ENCODE measurements at regions of chr12 and their contacts with region 1.

Region 1: GRCh38 chr12:57520053-57520871 is at the start of gene DDIT3:
- DNase-seq: peak; percentile 94 to 99 (median 96)
- ATAC-seq: peak; percentile 67
- H3K4me3 ChIP-seq: peak within 1 kb of the TSS; percentile 86
- H3K27ac ChIP-seq: peak within 1 kb of the TSS; percentile 99
- H3K4me1 ChIP-seq: peaks cover 34 to 48% of the 10 kb centered on the region in 2 experiments
- H3K27me3 ChIP-seq: no peaks in the 10 kb centered on the region
- CTCF ChIP-seq: 0 out of 6 replicates have a peak, but pooled peaks of 1 of the 3 experiments have one; percentile 1
- EP300 ChIP-seq: no peak
- POLR2A ChIP-seq: peak; percentile 100
- RAD21 ChIP-seq: no peak
- polyA plus RNA-seq, gene DDIT3: 254 to 272 TPM

Region 2: GRCh38 chr12:57481671-57482070 is 38.6 kb before region 1 on chr12:
- CTCF ChIA-PET with region 1: no interaction called
- POLR2A ChIA-PET with region 1: interaction called, 10 read pairs
- in situ Hi-C with region 1: no loop called
- intact Hi-C with region 1: loop called (anchors 5 kb)
- DNase-seq: no peak
- ATAC-seq: no peak
- H3K4me3 ChIP-seq: no peak overlapping the region
- H3K27ac ChIP-seq: no peak overlapping the region
- H3K4me1 ChIP-seq: peaks cover 25 to 27% of the 10 kb centered on the region in 2 experiments
- H3K27me3 ChIP-seq: no peaks in the 10 kb centered on the region
- CTCF ChIP-seq: no peak
- EP300 ChIP-seq: no peak
- POLR2A ChIP-seq: no peak
- RAD21 ChIP-seq: no peak

Region 3: DNA sequence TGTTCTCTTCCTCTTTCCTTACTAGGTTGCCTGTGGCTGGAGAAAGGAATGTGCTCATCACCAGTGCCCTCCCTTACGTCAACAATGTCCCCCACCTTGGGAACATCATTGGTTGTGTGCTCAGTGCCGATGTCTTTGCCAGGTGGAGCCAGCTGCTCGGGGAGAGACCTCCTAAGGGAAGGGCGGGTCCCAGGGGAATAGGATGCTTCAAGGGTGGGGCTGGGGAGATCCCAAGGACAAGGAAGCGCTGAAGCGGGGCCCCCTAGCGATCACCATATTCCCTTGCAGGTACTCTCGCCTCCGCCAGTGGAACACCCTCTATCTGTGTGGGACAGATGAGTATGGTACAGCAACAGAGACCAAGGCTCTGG is 22.1 kb before region 1 on chr12:
- CTCF ChIA-PET with region 1: no interaction called
- POLR2A ChIA-PET with region 1: interaction called, 184 read pairs
- in situ Hi-C with region 1: no loop called
- intact Hi-C with region 1: no loop called
- DNase-seq: no peak
- ATAC-seq: peak; percentile 39
- H3K4me3 ChIP-seq: no peak overlapping the region
- H3K27ac ChIP-seq: no peak overlapping the region
- H3K4me1 ChIP-seq: no peaks in the 10 kb centered on the region
- H3K27me3 ChIP-seq: no peaks in the 10 kb centered on the region
- CTCF ChIP-seq: no peak
- EP300 ChIP-seq: no peak
- POLR2A ChIP-seq: no peak
- RAD21 ChIP-seq: no peak

Region 4: GRCh38 chr12:57546438-57547383 is 26.4 kb after region 1 on chr12 and contains the start of gene DCTN2:
- CTCF ChIA-PET with region 1: no interaction called
- POLR2A ChIA-PET with region 1: interaction called, 225 read pairs
- in situ Hi-C with region 1: no loop called
- intact Hi-C with region 1: loop called (anchors 1 kb)
- DNase-seq: peak; percentile 93 to 98 (median 95)
- ATAC-seq: peak; percentile 87
- H3K4me3 ChIP-seq: peak within 1 kb of the TSS; percentile 93
- H3K27ac ChIP-seq: peak within 1 kb of the TSS; percentile 84
- H3K4me1 ChIP-seq: peaks cover 38 to 49% of the 10 kb centered on the region in 2 experiments
- H3K27me3 ChIP-seq: no peaks in the 10 kb centered on the region
- CTCF ChIP-seq: peak in 1 of 3 experiments; percentile 26; a peak in 2 of 6 replicates
- EP300 ChIP-seq: 0 out of 2 replicates have a peak, but pooled peaks have one; percentile 8
- POLR2A ChIP-seq: peak; percentile 79
- RAD21 ChIP-seq: no peak
- polyA plus RNA-seq, gene DCTN2: 43.6 to 64.7 TPM

Region 5: GRCh38 chr12:57583008-57583831 is 63.0 kb after region 1 on chr12:
- CTCF ChIA-PET with region 1: no interaction called
- POLR2A ChIA-PET with region 1: interaction called, 4 read pairs
- in situ Hi-C with region 1: no loop called
- intact Hi-C with region 1: loop called (anchors 1 kb)
- DNase-seq: peak; percentile 88 to 94 (median 92)
- ATAC-seq: peak; percentile 98
- H3K4me3 ChIP-seq: no peak overlapping the region
- H3K27ac ChIP-seq: no peak overlapping the region
- H3K4me1 ChIP-seq: no peaks in the 10 kb centered on the region; a peak in 2 of 5 replicates
- H3K27me3 ChIP-seq: no peaks in the 10 kb centered on the region
- CTCF ChIP-seq: peak; percentile 97 to 99 (median 99)
- EP300 ChIP-seq: no peak; the same call in 1 of the 2 replicates
- POLR2A ChIP-seq: no peak
- RAD21 ChIP-seq: peak; percentile 91 to 96

Region 6: GRCh38 chr12:57693659-57694458 is 173.6 kb after region 1 on chr12 and contains the start of gene OS9:
- CTCF ChIA-PET with region 1: no interaction called
- POLR2A ChIA-PET with region 1: interaction called, 8 read pairs
- in situ Hi-C with region 1: no loop called
- intact Hi-C with region 1: loop called (anchors 2 kb)
- DNase-seq: peak; percentile 99 to 100 (median 99)
- ATAC-seq: peak; percentile 99
- H3K4me3 ChIP-seq: peak within 1 kb of the TSS; percentile 82
- H3K27ac ChIP-seq: peak within 1 kb of the TSS; percentile 80
- H3K4me1 ChIP-seq: peaks cover 4 to 10% of the 10 kb centered on the region in 2 experiments; a peak in 3 of 5 replicates
- H3K27me3 ChIP-seq: no peaks in the 10 kb centered on the region
- CTCF ChIP-seq: peak; percentile 92 to 95 (median 94)
- EP300 ChIP-seq: no peak
- POLR2A ChIP-seq: peak; percentile 95
- RAD21 ChIP-seq: peak; percentile 69 to 70
- polyA plus RNA-seq, gene OS9: 4.6 to 7.9 TPM